Caco-2 (cell line): ENCODE measurements at regions of chr1 and their contacts with region 1.

Region 1: DNA sequence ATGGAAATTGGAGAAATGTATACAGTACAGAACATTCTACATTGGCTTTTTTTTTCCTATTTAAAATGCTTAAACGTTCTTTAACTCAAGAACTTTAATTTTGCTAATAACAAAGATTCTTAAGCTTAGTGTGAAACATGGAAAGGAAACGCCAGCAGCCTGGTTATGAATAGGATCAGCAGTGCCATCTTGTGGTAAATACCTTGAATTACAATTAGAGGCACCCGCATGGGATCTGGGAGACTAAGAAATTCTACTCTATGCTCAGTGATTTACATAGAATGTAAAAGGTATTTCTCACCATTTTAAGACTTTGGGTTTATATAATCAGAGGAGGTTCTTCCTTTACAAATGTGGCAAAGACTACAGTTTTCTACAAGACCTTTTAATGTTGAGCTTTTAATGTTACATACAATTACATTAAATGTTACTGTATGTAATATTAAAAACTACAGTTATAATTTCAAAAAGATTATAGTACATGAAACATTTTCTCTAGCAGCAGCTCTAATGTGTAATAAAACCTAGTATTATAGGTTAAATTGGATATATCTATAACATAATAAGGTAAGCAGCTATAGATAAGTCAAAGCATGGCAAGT is 32.1 kb upstream of the APOBEC4 start:
- DNase-seq: peak in 1 of 2 experiments; percentile 64
- H3K4me3 ChIP-seq: no peak overlapping the region
- H3K4me3 Mint-ChIP-seq: no peak overlapping the region
- H3K27ac Mint-ChIP-seq: no peak overlapping the region
- H3K4me1 ChIP-seq: peaks cover 9% of the 10 kb centered on the region; the same call in 1 of the 2 replicates
- H3K4me1 Mint-ChIP-seq: peaks cover 13% of the 10 kb centered on the region
- H3K27me3 ChIP-seq: no peaks in the 10 kb centered on the region
- H3K27me3 Mint-ChIP-seq: no peaks in the 10 kb centered on the region
- CTCF ChIP-seq: peak; percentile 60 to 80

Region 2: GRCh38 chr1:183609313-183609712 is 75.9 kb before region 1 on chr1:
- CTCF ChIA-PET with region 1: interaction called, 16 read pairs
- POLR2A ChIA-PET with region 1: no interaction called
- intact Hi-C with region 1: loop called (anchors 1 kb)
- DNase-seq: peak; percentile 50 to 59
- H3K4me3 ChIP-seq: no peak overlapping the region
- H3K4me3 Mint-ChIP-seq: no peak overlapping the region
- H3K27ac Mint-ChIP-seq: peak overlapping the region; percentile 49
- H3K4me1 ChIP-seq: no peaks in the 10 kb centered on the region
- H3K4me1 Mint-ChIP-seq: no peaks in the 10 kb centered on the region
- H3K27me3 ChIP-seq: no peaks in the 10 kb centered on the region
- H3K27me3 Mint-ChIP-seq: no peaks in the 10 kb centered on the region
- CTCF ChIP-seq: peak; percentile 41 to 61

Region 3: DNA sequence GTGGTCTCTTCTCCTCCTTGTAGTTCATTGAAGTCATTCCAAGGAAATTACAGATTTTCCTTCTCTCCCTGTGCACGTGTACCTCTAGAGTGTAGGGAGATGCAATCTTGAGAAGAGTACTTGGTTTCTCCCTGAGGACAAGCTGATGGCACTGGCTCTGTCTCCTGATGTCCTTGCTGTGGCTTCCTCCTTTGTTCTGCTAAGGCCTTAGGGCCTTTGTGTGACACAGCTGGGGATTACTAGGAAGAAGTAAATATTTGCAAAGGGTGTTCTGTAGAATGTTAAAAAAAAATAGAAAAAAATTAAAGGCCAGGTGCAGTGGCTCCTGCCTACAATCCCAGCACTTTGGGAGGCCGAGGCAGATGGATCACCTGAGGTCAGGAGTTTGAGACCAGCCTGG is 34.1 kb after region 1 on chr1:
- CTCF ChIA-PET with region 1: no interaction called
- POLR2A ChIA-PET with region 1: no interaction called
- intact Hi-C with region 1: loop called (anchors 1 kb)
- DNase-seq: peak; percentile 77 to 84
- H3K4me3 ChIP-seq: no peak overlapping the region
- H3K4me3 Mint-ChIP-seq: peak overlapping the region; percentile 37
- H3K27ac Mint-ChIP-seq: no peak overlapping the region
- H3K4me1 ChIP-seq: peaks cover 37% of the 10 kb centered on the region
- H3K4me1 Mint-ChIP-seq: peaks cover 16% of the 10 kb centered on the region
- H3K27me3 ChIP-seq: no peaks in the 10 kb centered on the region
- H3K27me3 Mint-ChIP-seq: no peaks in the 10 kb centered on the region
- CTCF ChIP-seq: no peak